K562 (cell line): ENCODE measurements at regions of chr22 and their contacts with region 1.

Region 1: GRCh38 chr22:23128269-23129108 is 13.3 kb downstream of the RSPH14 start:
- DNase-seq: peak; percentile 61 to 98 (median 62)
- ATAC-seq: peak; percentile 91
- H3K4me3 ChIP-seq: no peak overlapping the region
- H3K27ac ChIP-seq: no peak overlapping the region
- H3K4me1 ChIP-seq: peaks cover 0 to 9% of the 10 kb centered on the region in 2 experiments; a peak in 2 of 5 replicates
- H3K27me3 ChIP-seq: peaks cover 53 to 79% of the 10 kb centered on the region in 2 experiments
- CTCF ChIP-seq: peak in 1 of 3 experiments; percentile 100; a peak in 2 of 6 replicates
- EP300 ChIP-seq: peak; percentile 83
- POLR2A ChIP-seq: no peak
- RAD21 ChIP-seq: peak in 1 of 2 experiments; percentile 100; a peak in 2 of 4 replicates

Region 2: GRCh38 chr22:22692707-22693530 is 435.6 kb before region 1 on chr22:
- CTCF ChIA-PET with region 1: no interaction called
- POLR2A ChIA-PET with region 1: no interaction called
- in situ Hi-C with region 1: no loop called
- intact Hi-C with region 1: no loop called
- DNase-seq: peak; percentile 96 to 100 (median 99)
- ATAC-seq: peak; percentile 94
- H3K4me3 ChIP-seq: no peak overlapping the region
- H3K27ac ChIP-seq: no peak overlapping the region
- H3K4me1 ChIP-seq: no peaks in the 10 kb centered on the region
- H3K27me3 ChIP-seq: peaks cover 0 to 27% of the 10 kb centered on the region in 2 experiments; a peak in 2 of 5 replicates
- CTCF ChIP-seq: no peak
- EP300 ChIP-seq: no peak
- POLR2A ChIP-seq: no peak
- RAD21 ChIP-seq: no peak

Region 3: DNA sequence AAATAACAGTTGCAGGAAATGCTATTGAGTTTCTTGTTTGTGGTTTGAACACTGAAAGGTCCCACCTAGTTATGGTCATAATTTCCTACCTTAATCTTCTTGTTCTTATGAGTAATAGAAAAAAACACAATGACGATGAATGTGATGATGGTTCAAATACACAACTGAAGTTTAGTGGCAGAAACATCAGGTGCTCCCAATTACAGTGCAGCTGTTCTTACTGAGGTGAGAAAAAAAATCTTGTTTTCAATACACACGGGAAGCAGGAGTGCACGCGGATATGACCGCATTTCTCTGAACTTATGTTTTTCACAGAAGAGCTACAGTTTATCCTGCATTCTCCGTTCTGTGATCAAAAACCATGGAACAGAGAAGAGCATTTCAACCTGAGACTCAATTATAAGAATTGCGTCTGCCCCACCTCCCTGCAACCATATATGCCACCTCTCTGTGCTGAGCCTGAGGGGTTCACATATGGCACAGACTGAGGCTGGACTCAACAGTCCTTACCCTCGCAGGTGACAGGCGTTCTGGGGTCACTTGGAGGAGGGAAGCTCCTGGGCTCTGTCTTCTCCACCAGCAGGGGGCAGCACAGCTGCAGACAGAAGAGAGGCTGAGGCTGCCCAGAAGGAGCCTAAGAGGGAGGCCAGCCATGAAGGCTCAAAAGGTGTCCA is 340.6 kb before region 1 on chr22:
- CTCF ChIA-PET with region 1: interaction called, 9 read pairs
- POLR2A ChIA-PET with region 1: interaction called, 3 read pairs
- in situ Hi-C with region 1: no loop called
- intact Hi-C with region 1: loop called (anchors 1 kb)
- DNase-seq: peak; percentile 97 to 100 (median 99)
- ATAC-seq: peak; percentile 96
- H3K4me3 ChIP-seq: no peak overlapping the region
- H3K27ac ChIP-seq: no peak overlapping the region
- H3K4me1 ChIP-seq: peaks cover 0 to 3% of the 10 kb centered on the region in 2 experiments; a peak in 1 of 5 replicates
- H3K27me3 ChIP-seq: peaks cover 26 to 30% of the 10 kb centered on the region in 2 experiments; a peak in 4 of 5 replicates
- CTCF ChIP-seq: no peak
- EP300 ChIP-seq: no peak
- POLR2A ChIP-seq: no peak
- RAD21 ChIP-seq: no peak

Region 4: DNA sequence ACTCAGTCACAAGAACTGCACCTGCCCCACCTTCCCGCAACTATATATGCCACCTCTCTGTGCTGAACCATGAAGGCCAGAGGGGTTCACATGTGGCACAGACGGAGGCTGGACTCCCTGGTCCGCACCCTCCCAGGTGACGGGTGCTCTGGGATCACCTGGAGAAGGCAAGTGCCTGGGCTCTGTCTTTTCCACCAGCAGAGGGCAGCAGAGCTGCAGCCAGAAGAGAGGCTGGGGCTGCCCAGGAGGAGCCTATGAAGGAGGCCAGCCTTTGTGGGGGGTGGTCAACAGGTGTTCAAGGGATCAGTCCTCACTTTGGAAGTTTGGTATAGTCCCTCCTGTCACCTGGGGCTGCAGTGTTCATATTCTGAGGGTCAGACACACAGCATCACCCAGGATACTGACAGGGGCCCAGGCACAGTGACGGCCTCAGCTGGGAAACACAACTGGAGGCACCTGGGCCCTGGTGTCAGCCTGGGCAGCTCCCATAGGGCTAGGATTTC is 280.1 kb before region 1 on chr22:
- CTCF ChIA-PET with region 1: interaction called, 21 read pairs
- POLR2A ChIA-PET with region 1: interaction called, 5 read pairs
- in situ Hi-C with region 1: loop called (anchors 5 kb)
- intact Hi-C with region 1: loop called (anchors 1 kb)
- DNase-seq: peak; percentile 94 to 100 (median 98)
- ATAC-seq: peak; percentile 98
- H3K4me3 ChIP-seq: no peak overlapping the region
- H3K27ac ChIP-seq: no peak overlapping the region
- H3K4me1 ChIP-seq: no peaks in the 10 kb centered on the region
- H3K27me3 ChIP-seq: peaks cover 0 to 8% of the 10 kb centered on the region in 2 experiments; a peak in 1 of 5 replicates
- CTCF ChIP-seq: no peak
- EP300 ChIP-seq: no peak
- POLR2A ChIP-seq: no peak
- RAD21 ChIP-seq: no peak

Region 5: DNA sequence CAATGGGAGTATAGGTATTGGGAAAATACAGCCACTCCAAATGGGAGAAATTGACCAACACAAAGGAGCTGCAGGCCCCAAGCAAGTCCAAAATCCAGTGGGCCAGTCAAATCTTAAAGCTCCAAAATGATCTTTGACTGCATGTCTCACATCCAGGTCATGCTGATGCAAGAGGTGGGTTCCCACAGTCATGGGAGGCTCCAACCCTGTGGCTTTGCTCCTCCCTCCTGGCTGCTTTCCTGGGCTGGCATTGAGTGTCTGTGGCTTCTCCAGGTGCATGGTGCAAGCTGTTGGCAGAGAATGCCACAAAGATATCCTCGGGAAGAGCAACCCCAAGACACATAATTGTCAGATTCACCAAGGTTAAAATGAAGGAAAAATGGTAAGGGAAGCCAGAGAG is 160.1 kb before region 1 on chr22:
- CTCF ChIA-PET with region 1: interaction called, 549 read pairs
- POLR2A ChIA-PET with region 1: no interaction called
- in situ Hi-C with region 1: loop called (anchors 5 kb)
- intact Hi-C with region 1: no loop called
- DNase-seq: no peak
- ATAC-seq: peak; percentile 67
- H3K4me3 ChIP-seq: no peak overlapping the region
- H3K27ac ChIP-seq: no peak overlapping the region
- H3K4me1 ChIP-seq: no peaks in the 10 kb centered on the region
- H3K27me3 ChIP-seq: no peaks in the 10 kb centered on the region
- CTCF ChIP-seq: no peak
- EP300 ChIP-seq: no peak
- POLR2A ChIP-seq: no peak
- RAD21 ChIP-seq: no peak

Region 6: GRCh38 chr22:23113067-23113846 is 15.2 kb before region 1 on chr22:
- CTCF ChIA-PET with region 1: interaction called, 5 read pairs
- POLR2A ChIA-PET with region 1: interaction called, 414 read pairs
- in situ Hi-C with region 1: no loop called
- intact Hi-C with region 1: no loop called
- DNase-seq: peak in 3 of 4 experiments; percentile 52 to 63 (median 55)
- ATAC-seq: no peak
- H3K4me3 ChIP-seq: no peak overlapping the region
- H3K27ac ChIP-seq: no peak overlapping the region
- H3K4me1 ChIP-seq: peaks cover 0 to 20% of the 10 kb centered on the region in 2 experiments; a peak in 1 of 5 replicates
- H3K27me3 ChIP-seq: peaks cover 43 to 100% of the 10 kb centered on the region in 2 experiments; a peak in 4 of 5 replicates
- CTCF ChIP-seq: peak in 1 of 3 experiments; percentile 4; a peak in 1 of 6 replicates
- EP300 ChIP-seq: no peak
- POLR2A ChIP-seq: no peak
- RAD21 ChIP-seq: no peak

Region 7: DNA sequence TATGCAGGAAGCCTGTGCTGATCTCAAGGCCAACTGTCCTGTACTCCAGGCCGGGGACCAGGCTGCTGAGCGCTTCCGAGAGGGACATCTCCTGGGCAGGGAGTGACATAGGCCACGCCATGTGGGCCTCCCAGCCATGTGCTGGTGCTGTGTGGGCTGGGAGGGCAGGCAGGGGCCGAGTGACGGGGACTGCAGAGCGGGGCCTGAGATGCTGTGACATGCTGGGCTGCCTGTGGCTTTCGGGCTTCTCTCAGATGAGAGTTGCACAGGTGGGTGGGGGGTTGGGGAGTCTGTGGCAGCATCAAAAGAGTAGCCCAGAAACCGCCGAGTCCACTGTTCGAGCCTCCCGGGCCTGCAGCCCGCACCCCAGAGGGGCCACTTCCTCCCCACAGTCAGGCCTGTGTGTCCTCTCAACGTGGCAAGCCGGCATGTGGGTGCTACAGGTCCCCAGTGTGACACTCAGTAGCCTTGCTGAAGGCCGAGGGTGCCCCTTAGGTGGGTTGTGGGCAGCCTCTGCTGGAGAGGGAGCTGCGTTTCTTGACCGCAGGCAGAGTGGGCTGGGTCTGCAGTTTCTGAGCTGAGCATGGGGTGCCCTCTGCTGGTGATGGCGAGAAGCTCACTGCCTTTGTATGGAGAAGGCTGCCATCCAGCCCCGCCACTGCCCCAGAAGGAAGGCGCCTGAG is 153.1 kb after region 1 on chr22:
- CTCF ChIA-PET with region 1: interaction called, 19 read pairs
- POLR2A ChIA-PET with region 1: interaction called, 3 read pairs
- in situ Hi-C with region 1: no loop called
- intact Hi-C with region 1: loop called (anchors 1 kb)
- DNase-seq: peak; percentile 99 to 100 (median 100)
- ATAC-seq: peak; percentile 95
- H3K4me3 ChIP-seq: no peak overlapping the region
- H3K27ac ChIP-seq: no peak overlapping the region
- H3K4me1 ChIP-seq: peaks cover 0 to 27% of the 10 kb centered on the region in 2 experiments; a peak in 2 of 5 replicates
- H3K27me3 ChIP-seq: no peaks in the 10 kb centered on the region
- CTCF ChIP-seq: peak in 2 of 3 experiments; percentile 99 to 100; a peak in 4 of 6 replicates
- EP300 ChIP-seq: no peak
- POLR2A ChIP-seq: no peak
- RAD21 ChIP-seq: peak in 1 of 2 experiments; percentile 100; a peak in 2 of 4 replicates